Endothelial cell of umbilical vein (primary cell): ENCODE measurements at regions of chr5 and their contacts with region 1.

Region 1: DNA sequence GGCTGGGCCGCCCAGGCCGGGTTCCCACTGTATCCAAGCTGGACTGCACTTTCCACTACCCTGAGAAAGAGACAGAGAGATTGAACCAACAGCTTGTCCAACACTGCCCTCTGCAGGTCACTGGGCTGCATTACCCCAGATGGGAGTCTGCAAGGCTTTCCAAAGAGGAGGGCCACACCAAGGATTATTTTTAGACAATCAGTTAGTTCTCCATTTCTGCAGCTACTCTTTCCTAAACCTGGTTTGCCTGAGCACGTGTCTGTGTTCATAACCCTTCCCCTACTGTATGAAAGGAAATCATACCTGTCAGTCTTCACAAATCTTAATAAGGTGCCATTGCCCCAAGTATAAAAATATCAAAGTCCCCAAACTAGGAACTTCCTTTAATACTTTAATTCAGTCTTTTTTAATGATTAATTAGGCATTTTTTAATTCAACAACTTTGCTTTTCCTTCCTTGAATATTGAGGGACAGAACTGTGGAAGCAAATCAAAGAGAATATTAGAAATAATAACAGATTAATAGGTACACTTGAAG is 13.4 kb upstream of the FGF1 start:
- DNase-seq: peak; percentile 83
- H3K4me3 ChIP-seq: no peak overlapping the region
- H3K27ac ChIP-seq: no peak overlapping the region
- H3K4me1 ChIP-seq: no peaks in the 10 kb centered on the region
- H3K27me3 ChIP-seq: peaks cover 0 to 6% of the 10 kb centered on the region in 2 experiments
- CTCF ChIP-seq: peak; percentile 91 to 93
- POLR2A ChIP-seq: no peak

Region 2: GRCh38 chr5:142145106-142145900 is 553.9 kb before region 1 on chr5:
- CTCF ChIA-PET with region 1: interaction called, 3 read pairs
- POLR2A ChIA-PET with region 1: no interaction called
- dilution Hi-C with region 1: no loop called
- intact Hi-C with region 1: loop called (anchors 2 kb)
- DNase-seq: peak; percentile 71
- H3K4me3 ChIP-seq: no peak overlapping the region
- H3K27ac ChIP-seq: no peak overlapping the region
- H3K4me1 ChIP-seq: no peaks in the 10 kb centered on the region
- H3K27me3 ChIP-seq: no peaks in the 10 kb centered on the region
- CTCF ChIP-seq: peak; percentile 71 to 74
- POLR2A ChIP-seq: no peak

Region 3: GRCh38 chr5:142587354-142587965 is 111.8 kb before region 1 on chr5:
- CTCF ChIA-PET with region 1: interaction called, 40 read pairs
- POLR2A ChIA-PET with region 1: no interaction called
- dilution Hi-C with region 1: no loop called
- intact Hi-C with region 1: loop called (anchors 1 kb)
- DNase-seq: peak; percentile 49
- H3K4me3 ChIP-seq: no peak overlapping the region
- H3K27ac ChIP-seq: no peak overlapping the region
- H3K4me1 ChIP-seq: no peaks in the 10 kb centered on the region
- H3K27me3 ChIP-seq: peaks cover 6 to 18% of the 10 kb centered on the region in 2 experiments
- CTCF ChIP-seq: peak; percentile 49 to 59
- POLR2A ChIP-seq: no peak

Region 4: DNA sequence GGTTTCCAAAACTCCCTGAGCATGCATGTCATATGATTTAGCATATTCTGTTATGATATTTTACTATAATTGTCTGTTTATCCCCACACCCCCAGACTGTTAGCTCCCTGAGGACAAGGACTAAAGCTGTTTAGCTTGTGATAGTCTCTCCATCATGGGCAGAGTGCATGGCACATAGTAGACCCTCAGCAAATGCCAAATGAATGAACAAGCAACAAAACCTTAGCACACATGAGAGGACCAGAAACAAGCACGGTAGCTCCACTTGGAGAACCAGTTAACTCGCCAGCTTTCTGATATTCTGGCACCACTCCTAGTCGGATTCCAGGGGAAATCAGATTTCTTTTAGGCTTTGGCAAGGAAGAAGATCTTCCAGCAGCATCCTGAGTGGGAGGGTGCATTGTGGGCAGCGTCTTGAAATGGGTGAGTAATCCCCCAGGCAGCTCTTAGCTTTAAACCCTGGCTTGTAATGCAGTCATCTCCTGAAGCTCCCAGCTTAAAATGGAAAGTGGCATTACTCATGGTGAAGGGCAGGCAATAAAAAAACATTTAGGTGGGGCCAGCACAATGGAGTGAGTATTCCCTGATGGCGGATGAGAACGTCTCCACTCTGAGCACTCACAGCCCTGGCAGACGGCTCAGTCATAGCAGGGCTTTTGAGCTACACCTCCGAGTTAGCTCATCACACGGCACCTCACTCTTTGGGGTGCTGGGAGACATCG is 54.5 kb before region 1 on chr5:
- CTCF ChIA-PET with region 1: interaction called, 12 read pairs
- POLR2A ChIA-PET with region 1: no interaction called
- dilution Hi-C with region 1: no loop called
- intact Hi-C with region 1: no loop called
- DNase-seq: peak; percentile 91
- H3K4me3 ChIP-seq: no peak overlapping the region
- H3K27ac ChIP-seq: peak overlapping the region; percentile 82
- H3K4me1 ChIP-seq: peaks cover 12% of the 10 kb centered on the region
- H3K27me3 ChIP-seq: no peaks in the 10 kb centered on the region
- CTCF ChIP-seq: no peak
- POLR2A ChIP-seq: peak; percentile 34

Region 5: DNA sequence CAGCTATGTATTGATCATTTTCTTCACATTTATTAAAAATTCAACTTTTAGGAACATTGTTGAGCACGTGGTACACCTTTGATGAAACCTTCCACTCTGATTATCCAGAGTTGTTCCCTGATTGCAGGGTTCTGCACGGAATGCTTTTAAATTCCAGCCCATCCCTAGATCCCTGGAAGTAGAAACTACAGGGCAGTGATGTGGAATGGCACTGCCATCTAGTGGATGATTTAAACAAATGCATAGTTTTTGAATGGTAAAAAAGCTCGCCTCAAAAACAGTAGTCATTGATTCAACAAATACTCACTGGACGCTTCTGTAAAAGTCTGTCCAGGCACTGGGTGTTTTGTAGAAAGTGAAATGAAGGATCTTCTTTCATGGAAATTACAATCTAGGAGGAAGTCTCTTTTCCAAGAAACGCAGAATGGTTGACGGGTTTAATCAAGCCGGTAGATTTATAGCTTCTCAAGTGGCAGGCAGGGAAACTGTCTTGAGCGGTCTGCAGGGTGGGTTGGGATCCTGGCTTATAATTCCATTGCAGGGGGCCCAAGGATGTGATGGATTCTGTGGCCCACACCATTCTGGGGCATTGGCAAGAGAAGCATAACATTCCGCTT is 189.3 kb after region 1 on chr5:
- CTCF ChIA-PET with region 1: interaction called, 23 read pairs
- POLR2A ChIA-PET with region 1: no interaction called
- dilution Hi-C with region 1: loop called (anchors 25 kb)
- intact Hi-C with region 1: no loop called
- DNase-seq: peak; percentile 55
- H3K4me3 ChIP-seq: no peak overlapping the region
- H3K27ac ChIP-seq: no peak overlapping the region
- H3K4me1 ChIP-seq: peaks cover 3% of the 10 kb centered on the region
- H3K27me3 ChIP-seq: no peaks in the 10 kb centered on the region
- CTCF ChIP-seq: peak; percentile 50 to 60
- POLR2A ChIP-seq: no peak